ENCODE measurements at regions of chr7 and their contacts with region 1.

Region 1: DNA sequence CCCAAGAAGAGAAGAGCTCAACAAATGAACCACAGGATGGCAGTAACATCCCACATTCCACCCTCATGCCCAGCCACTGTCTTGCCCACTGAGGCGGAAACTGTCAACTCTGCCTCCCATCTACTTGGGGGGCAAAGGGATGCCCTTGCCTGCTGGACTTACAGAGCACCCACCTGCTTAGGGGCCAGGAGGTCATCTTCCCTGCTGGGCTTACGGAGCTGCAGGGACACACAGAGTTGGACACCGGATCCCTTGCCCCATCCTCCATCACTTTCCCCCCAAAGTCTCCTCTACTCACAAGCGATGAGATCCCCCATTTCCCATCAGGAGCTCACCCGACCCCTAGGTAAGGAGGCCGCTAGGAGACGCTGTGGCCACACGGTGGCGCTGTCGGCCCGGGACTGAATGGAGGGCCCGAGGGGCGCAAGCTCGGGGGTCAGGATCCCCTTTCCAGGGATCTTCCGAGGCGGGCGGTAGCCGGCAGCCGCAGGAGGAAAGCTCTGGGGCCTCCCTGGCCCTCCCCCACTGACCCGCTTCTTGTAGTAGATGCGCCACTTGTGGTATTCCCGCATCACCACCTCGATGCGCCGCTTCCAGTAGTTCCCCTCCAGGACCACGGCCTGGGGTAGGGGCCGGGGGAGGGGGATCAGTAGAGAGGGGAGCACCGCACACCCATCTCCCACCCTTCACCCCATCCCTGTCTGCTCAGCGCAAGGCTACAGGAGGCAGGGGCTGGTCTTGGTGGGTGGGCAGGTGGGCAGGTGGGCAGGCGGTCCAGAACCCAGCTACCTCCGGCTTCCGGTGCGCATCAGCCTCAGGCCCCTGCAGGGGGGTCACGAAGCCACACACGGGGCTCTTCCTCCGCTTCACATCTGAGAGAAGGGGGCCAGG is 17.3 kb downstream of the MLXIPL start:
- DNase-seq: no peak
- H3K4me3 ChIP-seq: no peak overlapping the region
- H3K27ac ChIP-seq: no peak overlapping the region
- H3K4me1 ChIP-seq: peaks cover 0 to 8% (median 4%) of the 10 kb centered on the region in 3 donors
- H3K27me3 ChIP-seq: peaks cover 0 to 67% (median 0%) of the 10 kb centered on the region in 4 donors
- CTCF ChIP-seq: peak; percentile 84 to 98 (median 88)
- POLR2A ChIP-seq: no peak

Region 2: GRCh38 chr7:73647725-73648592 is 40.9 kb after region 1 on chr7:
- intact Hi-C with region 1: no loop called
- DNase-seq: no peak
- H3K4me3 ChIP-seq: peak overlapping the region; percentile 5 to 64 (median 40)
- H3K27ac ChIP-seq: no peak overlapping the region
- H3K4me1 ChIP-seq: peaks cover 4 to 19% (median 8%) of the 10 kb centered on the region in 3 donors
- H3K27me3 ChIP-seq: peaks cover 6 to 100% (median 12%) of the 10 kb centered on the region in 4 donors
- CTCF ChIP-seq: peak in 1 of 6 experiments; percentile 8
- POLR2A ChIP-seq: no peak

Region 3: DNA sequence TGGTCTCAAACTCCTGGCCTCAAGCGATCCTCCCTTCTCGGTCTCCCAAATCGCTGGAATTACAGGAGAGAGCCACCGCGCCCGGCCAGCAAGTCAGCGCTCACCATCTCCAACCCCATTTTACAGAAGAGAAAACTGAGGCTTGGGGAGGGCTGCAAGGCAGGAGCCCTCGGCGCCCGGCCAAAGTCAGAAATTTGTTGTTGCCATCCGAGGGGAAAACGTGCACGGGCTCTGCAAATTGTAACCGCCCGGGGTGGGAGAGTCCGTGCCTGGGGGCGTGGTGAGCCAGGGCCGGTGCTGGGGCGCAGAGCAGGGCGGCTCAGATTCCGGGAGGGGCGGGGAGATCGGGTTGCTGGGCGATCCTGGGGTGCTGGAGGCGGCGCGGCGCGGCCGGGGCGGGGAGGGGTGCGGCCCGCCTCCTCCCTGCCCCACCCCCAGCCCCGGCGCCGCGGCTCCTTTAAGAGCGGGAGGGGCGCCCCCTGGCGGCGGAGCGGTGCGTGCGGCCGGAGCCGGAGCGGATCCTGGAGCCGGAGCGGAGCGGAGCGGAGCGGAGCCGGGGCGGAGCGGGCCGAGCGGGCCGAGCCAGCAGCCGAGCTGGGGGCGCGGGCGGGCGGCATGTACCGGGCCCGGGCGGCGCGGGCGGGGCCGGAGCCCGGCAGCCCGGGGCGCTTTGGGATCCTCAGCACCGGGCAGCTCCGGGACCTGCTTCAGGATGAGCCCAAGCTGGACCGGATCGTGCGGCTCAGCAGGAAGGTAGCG is 60.5 kb after region 1 on chr7 and contains the start of gene VPS37D:
- intact Hi-C with region 1: loop called (anchors 5 kb)
- DNase-seq: peak; percentile 46
- H3K4me3 ChIP-seq: peak within 1 kb of the TSS; percentile 29 to 80 (median 60)
- H3K27ac ChIP-seq: peak within 1 kb of the TSS in 3 of 4 donors; percentile 32 to 57 (median 43)
- H3K4me1 ChIP-seq: peaks cover 7 to 22% (median 8%) of the 10 kb centered on the region in 3 donors
- H3K27me3 ChIP-seq: peaks cover 0 to 61% (median 0%) of the 10 kb centered on the region in 4 donors
- CTCF ChIP-seq: peak; percentile 46 to 99 (median 98)
- POLR2A ChIP-seq: no peak
- total RNA-seq, gene VPS37D: 0.97 to 1.3 TPM in 2 of 4 donors, not detected in the others

Region 4: DNA sequence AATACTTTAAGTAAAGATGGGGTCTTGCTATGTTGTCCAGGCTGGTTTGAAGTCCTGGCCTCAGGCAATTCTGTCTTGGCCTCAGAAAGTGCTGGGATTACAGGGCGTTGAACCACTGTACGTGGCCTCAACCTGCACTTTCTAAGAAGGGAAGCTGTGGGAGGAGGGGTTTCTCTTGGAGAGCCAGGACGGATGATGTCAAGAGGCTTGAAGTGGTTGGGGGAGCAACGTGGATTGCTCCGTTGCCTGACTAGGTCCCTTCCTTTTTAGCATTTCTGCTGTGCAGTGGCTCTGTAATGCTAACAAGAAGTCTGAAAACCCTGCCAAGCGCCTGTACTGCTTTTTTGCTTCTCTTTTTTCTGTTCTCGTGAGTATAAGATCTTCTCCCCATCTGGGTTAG is 83.6 kb after region 1 on chr7:
- intact Hi-C with region 1: no loop called
- DNase-seq: no peak
- H3K4me3 ChIP-seq: no peak overlapping the region
- H3K27ac ChIP-seq: no peak overlapping the region
- H3K4me1 ChIP-seq: no peaks in the 10 kb centered on the region
- H3K27me3 ChIP-seq: no peaks in the 10 kb centered on the region
- CTCF ChIP-seq: no peak
- POLR2A ChIP-seq: no peak

Region 5: DNA sequence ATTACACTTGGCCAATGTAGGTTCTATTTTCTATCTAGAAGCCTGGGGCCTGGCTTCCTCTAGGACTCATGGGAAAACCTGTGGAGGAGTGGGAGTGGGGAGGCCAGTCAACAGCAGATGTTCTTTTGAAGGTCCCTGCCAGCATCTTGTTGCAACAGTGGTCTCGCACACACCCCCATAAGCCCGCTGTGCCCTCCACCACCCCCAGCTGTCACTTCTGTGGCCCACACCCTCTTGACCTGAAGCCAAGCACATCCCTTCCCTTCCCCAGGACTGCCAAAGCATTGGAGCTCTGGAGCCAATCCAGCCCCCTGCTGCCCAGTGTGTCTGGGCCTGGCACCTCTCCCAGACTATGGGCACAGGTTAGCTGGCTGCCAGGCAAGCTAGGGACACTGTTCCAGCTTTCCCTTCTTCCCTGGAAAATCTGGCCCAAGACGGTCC is 114.4 kb after region 1 on chr7:
- intact Hi-C with region 1: loop called (anchors 5 kb)
- DNase-seq: no peak
- H3K4me3 ChIP-seq: no peak overlapping the region
- H3K27ac ChIP-seq: no peak overlapping the region
- H3K4me1 ChIP-seq: peaks cover 26 to 52% (median 33%) of the 10 kb centered on the region in 3 donors
- H3K27me3 ChIP-seq: peaks cover 0 to 12% (median 0%) of the 10 kb centered on the region in 4 donors
- CTCF ChIP-seq: no peak
- POLR2A ChIP-seq: no peak

Measured in esophagus squamous epithelium (tissue), 5 donors.